Head of caudate nucleus (tissue), 42 donors: ENCODE measurements at regions of chr6 and their contacts with region 1.

Region 1: GRCh38 chr6:15491255-15491985 is 171.4 kb downstream of the DTNBP1 start:
- DNase-seq: peak; percentile 73 to 96 (median 88)

Region 2: DNA sequence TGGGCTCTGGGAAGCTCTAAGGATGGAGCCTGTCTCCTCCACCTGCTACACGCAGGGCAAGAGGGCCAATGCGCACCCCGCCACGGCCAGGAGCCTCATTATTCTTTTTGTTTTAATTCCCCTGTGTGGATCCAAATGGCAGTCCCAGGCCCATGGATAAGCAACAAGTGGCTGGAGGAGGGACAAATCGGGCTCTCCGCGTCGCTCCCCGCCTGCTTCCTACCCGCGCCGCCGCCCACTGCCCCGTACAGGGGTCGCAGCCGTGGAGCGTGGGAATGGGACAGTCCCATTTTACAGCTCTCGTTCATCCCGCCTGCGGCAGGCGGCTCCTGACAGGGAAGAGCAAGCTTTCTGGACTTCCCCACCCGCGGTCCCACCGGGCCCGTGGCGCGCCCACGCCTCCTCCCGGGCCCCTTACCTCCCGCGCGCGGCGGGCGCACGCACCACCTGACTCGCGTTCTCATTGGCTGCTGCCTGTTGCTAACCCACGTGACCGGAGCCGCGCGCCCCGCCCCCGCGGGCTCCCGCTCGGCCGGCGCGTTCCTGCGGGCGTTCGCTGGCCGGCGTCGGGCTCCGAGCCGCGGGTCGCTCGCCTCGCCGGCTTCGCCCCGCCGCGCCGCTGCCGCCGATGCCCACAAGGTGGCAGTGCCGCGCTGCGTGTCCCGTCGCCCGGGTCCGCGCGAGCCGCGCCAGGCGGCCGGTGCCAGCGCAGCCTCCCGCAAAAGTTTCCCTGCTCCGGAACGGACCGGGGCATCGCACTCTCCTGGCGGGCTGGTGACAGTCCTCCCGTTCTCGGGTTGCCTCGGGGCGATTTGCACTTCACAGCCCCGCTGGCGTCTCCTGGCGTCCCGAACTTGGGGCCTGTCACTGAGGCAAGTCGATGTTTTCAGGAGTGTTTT is 1280.5 kb before region 1 on chr6:
- intact Hi-C with region 1: loop called (anchors 10 kb)
- DNase-seq: peak; percentile 80 to 96 (median 92)

Region 3: DNA sequence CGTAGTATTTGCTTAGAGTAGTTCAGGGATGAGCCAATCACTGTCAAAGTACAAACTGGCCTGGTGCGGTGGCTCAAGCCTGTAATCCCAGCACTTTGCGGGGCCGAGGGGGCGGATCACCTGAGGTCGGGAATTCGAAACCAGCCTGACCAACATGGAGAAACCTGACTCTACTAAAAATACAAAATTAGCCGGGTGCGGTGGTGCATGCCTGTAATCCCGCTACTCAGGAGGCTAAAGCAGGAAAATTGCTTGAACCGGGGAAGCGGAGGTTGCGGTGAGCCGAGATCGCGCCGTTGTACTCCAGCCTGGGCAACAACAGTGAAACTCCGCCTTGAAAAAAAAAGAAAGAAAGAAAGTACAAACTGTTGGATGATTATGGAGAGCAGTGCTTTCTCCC is 273.0 kb before region 1 on chr6:
- intact Hi-C with region 1: no loop called
- DNase-seq: no peak

Region 4: GRCh38 chr6:15254070-15254841 is 237.2 kb before region 1 on chr6:
- intact Hi-C with region 1: loop called (anchors 10 kb)
- DNase-seq: peak in 13 of 42 donors; percentile 35 to 76 (median 55)

Region 5: GRCh38 chr6:15399641-15400470 is 91.6 kb before region 1 on chr6:
- intact Hi-C with region 1: loop called (anchors 5 kb)
- DNase-seq: peak; percentile 62 to 93 (median 80)

Region 6: DNA sequence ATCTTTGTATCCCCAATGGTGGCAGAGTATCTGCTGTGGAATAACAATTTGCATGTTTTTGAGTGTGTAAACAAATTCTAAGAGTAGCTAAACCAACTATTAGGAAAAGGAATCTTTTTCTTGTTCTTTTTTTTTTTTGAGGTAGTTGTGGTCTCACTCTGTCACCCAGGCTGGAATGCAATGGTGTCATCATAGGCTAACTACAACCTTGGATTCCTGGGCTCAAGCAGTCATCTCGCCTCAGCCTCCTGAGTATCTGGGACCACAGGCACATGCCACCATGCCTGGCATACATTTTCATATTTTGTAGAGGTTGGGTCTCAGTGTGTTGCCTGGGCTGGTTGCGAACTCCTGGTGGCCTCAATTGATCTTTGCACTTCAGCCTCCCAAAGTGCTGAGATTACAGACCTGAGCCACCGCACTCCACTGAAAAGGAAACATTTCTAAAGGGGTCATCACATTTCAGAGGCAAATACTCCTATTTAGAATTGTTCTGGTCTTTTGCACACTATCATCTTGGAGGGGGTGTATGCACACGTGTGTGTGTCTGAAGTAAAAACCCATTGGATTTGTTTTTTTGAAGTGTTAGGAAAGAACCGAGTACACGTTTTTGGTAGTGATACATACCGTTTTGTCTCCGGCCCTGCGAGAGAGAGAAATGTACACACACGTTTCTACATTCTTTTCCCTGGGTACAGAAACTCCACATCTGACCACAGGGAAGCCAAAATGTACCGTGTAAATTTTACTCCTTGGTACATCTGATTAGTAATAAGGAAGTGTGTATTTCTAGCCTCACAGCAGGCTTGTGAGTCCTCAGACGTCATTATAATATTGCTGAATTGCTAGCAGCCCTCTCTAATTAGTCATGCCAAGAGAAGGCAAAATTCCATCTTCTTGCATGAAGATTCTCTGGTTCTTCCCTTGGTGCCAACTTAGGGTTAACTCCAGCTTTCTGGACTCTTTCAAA is 62.0 kb before region 1 on chr6:
- intact Hi-C with region 1: no loop called
- DNase-seq: peak in 1 of 42 donors; percentile 31

Region 7: GRCh38 chr6:15441215-15441868 is 50.1 kb before region 1 on chr6:
- intact Hi-C with region 1: loop called (anchors 10 kb)
- DNase-seq: peak in 27 of 42 donors; percentile 10 to 82 (median 53)